Esophagus muscularis mucosa (tissue), 4 donors: ENCODE measurements at regions of chr17 and their contacts with region 1.

Region 1: DNA sequence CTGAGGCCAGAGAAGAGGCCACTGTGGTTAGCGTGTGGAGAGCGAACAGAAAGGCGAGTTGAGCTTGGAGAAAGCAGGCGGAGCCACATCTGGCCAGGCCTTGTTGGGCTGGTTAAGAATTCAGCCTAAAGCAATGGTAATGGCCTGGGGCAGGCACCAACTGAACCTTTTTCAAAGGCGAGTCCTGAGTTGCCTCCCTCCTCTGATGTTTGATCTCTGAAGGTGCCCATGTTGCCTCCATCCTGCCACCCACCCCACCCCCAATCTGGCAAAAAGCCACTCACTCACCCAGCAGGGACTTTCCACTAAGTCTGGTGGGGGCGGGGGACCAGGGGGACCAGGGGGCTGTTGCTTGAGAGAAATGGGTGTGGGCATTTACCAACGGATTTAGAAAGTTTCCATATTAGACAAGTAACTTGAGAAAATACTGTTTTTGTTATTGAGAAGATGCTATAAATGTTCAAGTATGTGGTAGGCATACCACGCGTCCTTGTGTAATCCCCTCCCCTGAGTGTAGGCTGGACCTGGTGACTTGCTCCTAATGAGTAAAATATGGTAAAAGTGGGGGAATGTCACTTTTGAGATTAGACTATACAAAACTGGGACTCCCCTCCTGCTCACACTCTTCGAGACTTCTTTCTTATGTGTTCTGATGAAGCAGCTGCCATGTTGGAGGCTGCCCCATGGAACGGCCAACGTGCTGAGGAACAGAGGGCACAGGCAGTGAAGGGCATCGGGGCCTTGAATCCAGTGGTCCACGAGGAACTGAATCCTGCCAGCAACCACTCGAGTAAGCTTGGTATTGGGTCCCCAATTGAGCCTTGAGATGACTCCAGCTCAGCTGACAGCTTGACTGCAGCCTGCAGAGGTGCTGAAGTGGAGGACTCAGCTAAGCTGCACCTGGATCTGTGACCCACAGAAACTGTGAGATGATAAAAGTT is 29.9 kb upstream of the TNS4 start:
- DNase-seq: no peak
- H3K4me3 ChIP-seq: no peak overlapping the region
- H3K27ac ChIP-seq: no peak overlapping the region
- H3K4me1 ChIP-seq: peaks cover 25 to 36% (median 35%) of the 10 kb centered on the region in 4 donors
- H3K27me3 ChIP-seq: no peaks in the 10 kb centered on the region
- CTCF ChIP-seq: no peak
- EP300 ChIP-seq: no peak
- POLR2A ChIP-seq: no peak

Region 2: GRCh38 chr17:40362696-40363110 is 168.6 kb before region 1 on chr17:
- intact Hi-C with region 1: loop called (anchors 5 kb)
- DNase-seq: no peak
- H3K4me3 ChIP-seq: peak overlapping the region; percentile 57 to 68 (median 60)
- H3K27ac ChIP-seq: peak overlapping the region in 1 of 4 donors; percentile 39
- H3K4me1 ChIP-seq: peaks cover 10 to 47% (median 30%) of the 10 kb centered on the region in 4 donors
- H3K27me3 ChIP-seq: peaks cover 0 to 8% (median 0%) of the 10 kb centered on the region in 4 donors
- CTCF ChIP-seq: peak; percentile 43 to 57 (median 45)
- EP300 ChIP-seq: no peak
- POLR2A ChIP-seq: no peak

Region 3: DNA sequence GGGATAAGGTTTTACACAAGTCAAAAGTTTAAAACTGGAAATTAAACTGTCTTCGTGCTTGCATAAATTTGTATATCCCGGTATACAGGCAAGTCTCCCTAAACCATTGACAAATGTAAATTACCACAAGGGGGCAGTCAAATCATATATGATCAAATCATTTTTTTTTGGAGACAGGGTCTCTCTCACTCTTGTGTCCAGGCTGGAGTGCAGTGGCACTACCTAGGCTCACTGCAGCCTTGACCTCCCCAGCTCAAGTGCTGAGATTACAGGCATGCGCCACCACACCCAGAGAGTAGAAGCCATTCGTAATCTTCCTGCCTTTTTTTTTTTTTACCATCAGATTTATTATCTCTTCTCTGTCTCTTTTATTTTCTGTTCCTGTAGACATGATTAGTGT is 132.1 kb before region 1 on chr17:
- intact Hi-C with region 1: loop called (anchors 2 kb)
- DNase-seq: no peak
- H3K4me3 ChIP-seq: no peak overlapping the region
- H3K27ac ChIP-seq: no peak overlapping the region
- H3K4me1 ChIP-seq: peaks cover 0 to 2% (median 0%) of the 10 kb centered on the region in 4 donors
- H3K27me3 ChIP-seq: no peaks in the 10 kb centered on the region
- CTCF ChIP-seq: peak; percentile 58 to 65 (median 62)
- EP300 ChIP-seq: no peak
- POLR2A ChIP-seq: no peak

Region 4: DNA sequence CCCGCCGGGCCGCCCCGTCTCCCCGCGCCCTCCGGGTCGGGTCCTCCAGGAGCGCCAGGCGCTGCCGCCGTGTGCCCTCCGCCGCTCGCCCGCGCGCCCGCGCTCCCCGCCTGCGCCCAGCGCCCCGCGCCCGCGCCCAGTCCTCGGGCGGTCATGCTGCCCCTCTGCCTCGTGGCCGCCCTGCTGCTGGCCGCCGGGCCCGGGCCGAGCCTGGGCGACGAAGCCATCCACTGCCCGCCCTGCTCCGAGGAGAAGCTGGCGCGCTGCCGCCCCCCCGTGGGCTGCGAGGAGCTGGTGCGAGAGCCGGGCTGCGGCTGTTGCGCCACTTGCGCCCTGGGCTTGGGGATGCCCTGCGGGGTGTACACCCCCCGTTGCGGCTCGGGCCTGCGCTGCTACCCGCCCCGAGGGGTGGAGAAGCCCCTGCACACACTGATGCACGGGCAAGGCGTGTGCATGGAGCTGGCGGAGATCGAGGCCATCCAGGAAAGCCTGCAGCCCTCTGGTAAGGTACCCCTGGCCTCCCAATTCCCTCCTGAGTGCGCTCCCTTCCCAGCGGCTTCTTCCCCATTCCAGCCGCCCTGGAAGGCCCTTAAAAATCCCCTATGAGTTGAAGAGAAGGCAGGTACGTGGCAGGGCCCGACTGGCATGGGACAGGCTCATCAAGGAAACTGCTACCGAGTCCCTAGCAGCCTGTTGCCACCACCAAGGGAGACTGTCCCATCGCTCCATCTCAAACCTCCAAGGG is 87.6 kb before region 1 on chr17:
- intact Hi-C with region 1: loop called (anchors 2 kb)
- DNase-seq: no peak
- H3K4me3 ChIP-seq: peak overlapping the region; percentile 66 to 88 (median 81)
- H3K27ac ChIP-seq: peak overlapping the region; percentile 88 to 98 (median 93)
- H3K4me1 ChIP-seq: peaks cover 44 to 69% (median 64%) of the 10 kb centered on the region in 4 donors
- H3K27me3 ChIP-seq: no peaks in the 10 kb centered on the region
- CTCF ChIP-seq: peak; percentile 18 to 43 (median 31)
- EP300 ChIP-seq: no peak
- POLR2A ChIP-seq: no peak

Region 5: DNA sequence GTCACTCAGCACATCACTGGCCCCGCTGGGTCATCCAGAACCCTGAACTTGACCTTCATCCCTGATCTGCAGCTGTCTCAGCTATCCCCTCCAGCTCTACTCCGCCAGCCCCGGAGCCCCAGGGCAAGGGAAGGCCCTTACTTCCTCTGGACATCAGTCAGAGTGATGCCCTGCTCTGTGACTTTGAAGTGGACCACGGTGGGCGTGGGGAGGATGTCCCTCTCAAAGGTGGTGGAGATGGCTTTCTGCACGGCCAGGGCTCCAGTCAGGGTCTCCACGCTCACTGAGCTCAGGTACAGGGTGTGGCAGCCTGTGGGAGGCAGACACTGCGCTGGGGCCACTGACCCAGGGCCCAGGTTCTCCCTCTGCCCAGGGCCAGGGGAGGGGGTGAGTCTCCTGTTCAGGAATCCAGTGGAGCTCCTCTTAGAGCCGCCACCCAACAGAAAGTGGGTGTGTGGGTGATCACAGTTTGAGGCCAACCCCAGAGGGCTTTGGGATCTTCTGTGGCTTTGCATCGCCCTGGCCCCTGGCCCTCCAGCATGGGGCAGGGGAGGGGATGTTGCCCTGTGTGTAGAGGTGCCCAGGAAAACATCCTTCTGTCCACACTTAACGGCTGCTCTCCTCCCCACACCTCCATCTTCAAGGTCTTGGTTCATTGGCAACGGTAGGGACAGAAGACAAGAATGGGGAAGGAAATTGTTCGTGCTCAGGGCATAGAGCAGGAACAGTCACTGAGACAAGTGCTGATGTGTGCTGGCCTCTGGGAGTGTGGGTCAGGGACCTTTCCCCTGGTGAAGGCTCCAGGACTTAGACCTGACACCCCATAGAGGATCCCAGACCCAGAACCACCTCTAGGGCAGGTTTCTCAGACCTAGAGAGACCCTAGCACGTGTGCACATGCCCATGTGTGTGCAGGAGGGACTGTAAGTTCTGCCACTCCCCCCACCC is 51.5 kb before region 1 on chr17:
- intact Hi-C with region 1: loop called (anchors 5 kb)
- DNase-seq: no peak
- H3K4me3 ChIP-seq: no peak overlapping the region
- H3K27ac ChIP-seq: no peak overlapping the region
- H3K4me1 ChIP-seq: peaks cover 11 to 34% (median 26%) of the 10 kb centered on the region in 4 donors
- H3K27me3 ChIP-seq: no peaks in the 10 kb centered on the region
- CTCF ChIP-seq: no peak
- EP300 ChIP-seq: no peak
- POLR2A ChIP-seq: no peak

Region 6: DNA sequence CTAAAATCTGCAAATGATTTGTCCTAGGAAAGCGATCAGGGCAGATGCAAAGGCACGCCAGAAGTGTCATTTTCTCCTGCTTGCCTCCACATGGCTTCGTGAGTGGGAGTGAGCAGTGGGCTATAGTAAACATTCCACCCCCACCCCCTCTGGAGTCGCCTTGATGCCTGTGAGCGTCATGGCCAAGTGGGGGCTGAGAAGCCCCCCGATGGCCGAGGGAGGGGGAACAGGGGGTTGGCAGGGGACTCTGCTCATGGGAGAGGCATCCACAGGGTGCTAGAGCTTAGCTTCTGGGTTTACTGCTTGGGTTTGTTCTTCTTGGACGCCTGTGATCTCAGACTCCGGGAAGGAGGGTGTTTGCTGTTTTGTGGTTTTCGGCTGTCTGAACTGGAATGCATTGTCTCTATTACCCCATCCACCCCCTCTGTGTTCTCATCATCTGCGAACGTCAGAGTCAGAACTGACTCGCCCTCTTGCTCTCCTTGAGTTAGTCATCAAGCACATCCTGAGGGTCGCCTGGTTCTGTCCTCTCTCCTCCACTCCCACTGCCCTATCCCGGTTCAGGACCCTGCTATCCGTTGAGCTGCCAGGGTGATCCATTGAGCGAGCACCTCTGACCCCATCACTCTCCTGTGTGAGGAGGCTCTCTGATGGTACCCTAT is 45.3 kb before region 1 on chr17:
- intact Hi-C with region 1: loop called (anchors 5 kb)
- DNase-seq: no peak
- H3K4me3 ChIP-seq: no peak overlapping the region
- H3K27ac ChIP-seq: peak overlapping the region; percentile 62 to 80 (median 66)
- H3K4me1 ChIP-seq: peaks cover 8 to 48% (median 42%) of the 10 kb centered on the region in 4 donors
- H3K27me3 ChIP-seq: no peaks in the 10 kb centered on the region
- CTCF ChIP-seq: no peak
- EP300 ChIP-seq: no peak
- POLR2A ChIP-seq: no peak